ENCODE measurements at regions of chr21 and their contacts with region 1.

Region 1: GRCh38 chr21:22703521-22703920 is 1705.3 kb downstream of the NCAM2 start:
- DNase-seq: no peak
- H3K4me3 ChIP-seq: no peak overlapping the region
- H3K27ac ChIP-seq: no peak overlapping the region
- H3K4me1 ChIP-seq: no peaks in the 10 kb centered on the region
- H3K27me3 ChIP-seq: no peaks in the 10 kb centered on the region
- CTCF ChIP-seq: no peak
- EP300 ChIP-seq: no peak
- POLR2A ChIP-seq: no peak

Region 2: GRCh38 chr21:22649246-22649645 is 54.3 kb before region 1 on chr21:
- in situ Hi-C with region 1: loop called in 1 of 4 experiments (anchors 10 kb)
- intact Hi-C with region 1: no loop called
- DNase-seq: no peak
- H3K4me3 ChIP-seq: no peak overlapping the region
- H3K27ac ChIP-seq: no peak overlapping the region
- H3K4me1 ChIP-seq: no peaks in the 10 kb centered on the region
- H3K27me3 ChIP-seq: no peaks in the 10 kb centered on the region
- CTCF ChIP-seq: no peak
- EP300 ChIP-seq: no peak
- POLR2A ChIP-seq: no peak

Region 3: GRCh38 chr21:22679207-22679606 is 24.3 kb before region 1 on chr21:
- in situ Hi-C with region 1: no loop called
- intact Hi-C with region 1: no loop called
- DNase-seq: no peak
- H3K4me3 ChIP-seq: no peak overlapping the region
- H3K27ac ChIP-seq: no peak overlapping the region
- H3K4me1 ChIP-seq: no peaks in the 10 kb centered on the region
- H3K27me3 ChIP-seq: no peaks in the 10 kb centered on the region
- CTCF ChIP-seq: no peak
- EP300 ChIP-seq: no peak
- POLR2A ChIP-seq: no peak